A673 (cell line): ENCODE measurements at regions of chrX and their contacts with region 1.

Region 1: GRCh38 chrX:80578517-80579105 is 158.4 kb downstream of the TENT5D start:
- DNase-seq: peak; percentile 47
- H3K4me3 ChIP-seq: no peak overlapping the region
- H3K27ac ChIP-seq: no peak overlapping the region
- H3K4me1 ChIP-seq: no peaks in the 10 kb centered on the region
- H3K27me3 ChIP-seq: no peaks in the 10 kb centered on the region
- CTCF ChIP-seq: peak; percentile 65

Region 2: GRCh38 chrX:80285131-80285773 is 293.4 kb before region 1 on chrX:
- CTCF ChIA-PET with region 1: no interaction called
- POLR2A ChIA-PET with region 1: interaction called, 4 read pairs
- intact Hi-C with region 1: loop called (anchors 10 kb)
- DNase-seq: peak; percentile 67
- H3K4me3 ChIP-seq: no peak overlapping the region
- H3K27ac ChIP-seq: no peak overlapping the region
- H3K4me1 ChIP-seq: no peaks in the 10 kb centered on the region
- H3K27me3 ChIP-seq: no peaks in the 10 kb centered on the region
- CTCF ChIP-seq: peak; percentile 74

Region 3: DNA sequence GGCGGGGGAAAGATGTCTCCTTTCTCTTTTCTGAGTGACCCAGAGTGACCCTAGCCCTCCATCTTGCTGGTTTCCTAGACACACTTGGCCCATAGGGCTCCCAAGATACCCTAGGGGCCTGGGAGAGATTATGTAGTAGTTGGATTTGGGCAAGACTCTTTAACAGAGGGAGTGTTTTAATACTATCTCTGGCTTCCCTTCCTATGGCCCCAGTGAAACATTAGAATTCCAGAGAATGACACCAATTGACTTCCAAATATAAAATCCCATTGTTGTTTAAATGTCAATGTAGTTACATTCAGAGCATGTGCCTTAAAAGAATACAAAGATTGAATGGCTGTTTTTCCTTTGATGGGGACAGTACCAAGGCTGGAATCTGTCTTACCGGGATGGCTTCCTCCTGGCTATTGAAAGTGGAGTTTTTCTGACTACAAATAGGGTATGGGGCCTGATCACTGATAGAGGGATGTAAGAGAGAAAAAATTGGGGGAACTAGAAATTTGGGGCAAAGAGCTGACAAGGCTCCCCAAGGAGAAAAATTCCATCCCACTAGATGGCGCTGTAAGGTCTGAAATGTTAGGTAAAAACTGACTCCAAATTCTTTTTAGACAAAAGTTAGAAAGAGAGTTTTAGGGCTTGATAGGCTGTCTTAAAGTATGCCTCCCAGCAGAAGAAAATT is 147.6 kb before region 1 on chrX:
- CTCF ChIA-PET with region 1: no interaction called
- POLR2A ChIA-PET with region 1: no interaction called
- intact Hi-C with region 1: loop called (anchors 1 kb)
- DNase-seq: peak; percentile 18
- H3K4me3 ChIP-seq: no peak overlapping the region
- H3K27ac ChIP-seq: no peak overlapping the region
- H3K4me1 ChIP-seq: no peaks in the 10 kb centered on the region
- H3K27me3 ChIP-seq: no peaks in the 10 kb centered on the region
- CTCF ChIP-seq: peak; percentile 48

Region 4: DNA sequence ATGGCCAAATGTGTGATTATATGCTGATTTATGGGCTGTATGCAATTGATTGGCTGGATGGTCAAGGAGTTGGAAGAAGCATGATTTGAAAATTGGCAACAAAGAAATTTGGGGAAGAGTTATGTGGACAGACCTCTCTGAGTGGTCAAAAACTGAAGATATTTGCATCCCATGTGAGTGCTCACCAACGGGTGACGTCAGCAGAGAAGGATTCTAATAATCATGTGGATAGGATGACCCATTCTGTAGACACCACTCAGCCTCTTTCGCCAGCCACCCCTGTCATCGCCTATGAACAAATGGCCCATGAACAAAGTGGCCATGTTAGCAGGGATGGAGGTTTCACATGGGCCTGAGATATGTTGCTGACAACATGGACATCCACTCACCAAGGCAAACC is 55.0 kb before region 1 on chrX:
- CTCF ChIA-PET with region 1: no interaction called
- POLR2A ChIA-PET with region 1: no interaction called
- intact Hi-C with region 1: no loop called
- DNase-seq: no peak
- H3K4me3 ChIP-seq: no peak overlapping the region
- H3K27ac ChIP-seq: no peak overlapping the region
- H3K4me1 ChIP-seq: no peaks in the 10 kb centered on the region
- H3K27me3 ChIP-seq: no peaks in the 10 kb centered on the region
- CTCF ChIP-seq: no peak